CD8-positive, alpha-beta memory T cell (primary cell): ENCODE measurements at regions of chr11 and their contacts with region 1.

Region 1: DNA sequence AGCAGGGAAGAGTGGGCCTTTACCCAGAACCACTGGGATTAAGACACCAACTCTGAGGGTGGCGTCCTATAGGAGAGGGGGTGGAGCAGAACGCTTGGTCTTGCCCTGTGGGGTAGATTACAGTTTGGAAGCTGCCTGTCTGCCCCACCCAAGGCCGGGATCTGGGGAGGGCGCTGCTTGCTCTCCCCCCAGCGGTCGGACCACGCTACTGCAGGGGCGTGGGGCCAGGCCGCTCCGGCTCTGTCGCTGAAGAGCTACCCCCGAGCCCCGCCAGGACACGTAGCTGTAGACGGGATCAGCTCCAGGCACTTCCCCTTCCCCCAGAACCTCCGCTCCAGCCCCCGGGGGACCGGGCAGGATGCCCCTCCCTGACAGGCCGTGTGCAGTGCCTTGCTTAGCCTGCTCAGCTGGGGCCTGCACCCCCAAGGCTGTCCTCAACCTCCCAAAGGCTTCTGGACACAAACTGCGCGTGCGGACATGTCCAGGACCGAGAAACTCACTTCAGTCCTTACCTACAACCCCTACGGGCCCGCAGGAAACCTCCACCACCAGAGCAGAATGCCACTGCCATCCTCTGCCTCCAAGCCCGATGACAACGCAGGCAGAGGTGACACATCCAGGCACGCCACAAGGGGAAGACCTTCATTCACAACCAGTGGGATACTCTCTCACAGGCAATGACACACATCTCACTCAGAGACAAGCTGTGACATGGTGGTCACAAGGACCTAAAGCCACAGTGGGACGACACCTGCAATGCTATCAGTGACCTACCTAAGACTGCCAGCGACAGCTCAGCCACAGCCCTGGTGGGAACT is 3.6 kb downstream of the AHNAK start:
- DNase-seq: peak; percentile 61 to 86 (median 70)
- H3K4me3 ChIP-seq: peak overlapping the region; percentile 76
- H3K4me3 Mint-ChIP-seq: peak overlapping the region; percentile 92 to 99 (median 98)
- H3K27ac ChIP-seq: peak overlapping the region; percentile 96
- H3K27ac Mint-ChIP-seq: peak overlapping the region; percentile 92 to 100 (median 97)
- H3K4me1 ChIP-seq: peaks cover 72% of the 10 kb centered on the region
- H3K4me1 Mint-ChIP-seq: peaks cover 66 to 83% (median 74%) of the 10 kb centered on the region in 3 donors
- H3K27me3 ChIP-seq: no peaks in the 10 kb centered on the region
- H3K27me3 Mint-ChIP-seq: peaks cover 0 to 3% of the 10 kb centered on the region in 2 donors

Region 2: GRCh38 chr11:62370743-62371440 is 172.1 kb before region 1 on chr11:
- CTCF ChIA-PET with region 1: no interaction called
- POLR2A ChIA-PET with region 1: no interaction called
- DNase-seq: peak in 4 of 5 donors; percentile 38 to 71 (median 56)
- H3K4me3 ChIP-seq: no peak overlapping the region
- H3K4me3 Mint-ChIP-seq: peak overlapping the region; percentile 41 to 82 (median 76)
- H3K27ac ChIP-seq: no peak overlapping the region
- H3K27ac Mint-ChIP-seq: peak overlapping the region in 7 of 8 donors; percentile 11 to 91 (median 87)
- H3K4me1 ChIP-seq: no peaks in the 10 kb centered on the region
- H3K4me1 Mint-ChIP-seq: peaks cover 3 to 42% (median 18%) of the 10 kb centered on the region in 3 donors
- H3K27me3 ChIP-seq: no peaks in the 10 kb centered on the region
- H3K27me3 Mint-ChIP-seq: peaks cover 0 to 2% of the 10 kb centered on the region in 2 donors

Region 3: GRCh38 chr11:62400760-62401159 is 142.2 kb before region 1 on chr11:
- CTCF ChIA-PET with region 1: interaction called, 18 read pairs
- POLR2A ChIA-PET with region 1: interaction called, 11 read pairs
- DNase-seq: no peak
- H3K4me3 ChIP-seq: no peak overlapping the region
- H3K4me3 Mint-ChIP-seq: peak overlapping the region in 1 of 7 donors; percentile 25
- H3K27ac ChIP-seq: no peak overlapping the region
- H3K27ac Mint-ChIP-seq: peak overlapping the region in 2 of 8 donors; percentile 12 to 60
- H3K4me1 ChIP-seq: peaks cover 48% of the 10 kb centered on the region
- H3K4me1 Mint-ChIP-seq: peaks cover 23 to 42% (median 25%) of the 10 kb centered on the region in 3 donors
- H3K27me3 ChIP-seq: no peaks in the 10 kb centered on the region
- H3K27me3 Mint-ChIP-seq: peaks cover 0 to 2% of the 10 kb centered on the region in 2 donors

Region 4: DNA sequence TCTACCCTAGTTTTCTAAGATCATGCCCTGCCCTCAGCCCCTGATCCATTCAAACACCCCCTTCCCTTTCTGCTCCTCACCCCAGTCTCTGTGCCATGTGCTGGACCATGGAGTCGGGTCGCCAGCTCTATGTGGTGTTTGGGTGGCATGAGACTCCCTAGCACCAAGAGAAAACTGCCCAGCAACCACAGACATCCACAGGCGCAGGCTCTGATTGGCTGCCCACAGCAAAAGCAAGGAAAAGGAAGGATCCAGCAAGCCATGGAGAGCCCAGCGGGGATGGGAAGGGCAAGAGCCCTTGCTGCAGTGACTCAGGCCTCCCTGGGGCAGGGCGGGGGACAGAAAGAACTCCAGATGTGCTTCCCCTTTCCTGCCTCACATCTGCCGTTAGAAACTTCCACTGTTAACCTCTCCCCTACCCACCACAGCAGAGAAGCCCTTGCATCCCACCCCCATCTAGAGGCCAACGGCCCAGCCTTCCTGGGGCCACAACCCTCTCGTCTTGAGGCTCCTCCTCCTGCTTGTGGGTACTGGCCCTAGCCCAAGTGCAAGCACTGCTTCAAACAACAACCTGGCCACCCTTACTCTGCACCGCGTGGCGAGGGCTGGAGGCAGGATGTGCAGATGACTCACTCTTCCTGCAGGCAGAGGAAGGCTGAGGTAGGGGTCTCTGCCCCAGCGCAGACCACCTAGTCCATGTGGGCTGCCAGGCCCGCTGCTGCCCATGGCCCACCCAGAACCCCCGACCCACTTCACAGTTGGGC is 13.3 kb after region 1 on chr11:
- CTCF ChIA-PET with region 1: interaction called, 203 read pairs
- POLR2A ChIA-PET with region 1: interaction called, 193 read pairs
- DNase-seq: peak; percentile 74 to 95 (median 83)
- H3K4me3 ChIP-seq: peak overlapping the region; percentile 70
- H3K4me3 Mint-ChIP-seq: peak overlapping the region; percentile 80 to 95 (median 85)
- H3K27ac ChIP-seq: peak overlapping the region; percentile 95
- H3K27ac Mint-ChIP-seq: peak overlapping the region; percentile 97 to 100 (median 99)
- H3K4me1 ChIP-seq: peaks cover 96% of the 10 kb centered on the region
- H3K4me1 Mint-ChIP-seq: peaks cover 91 to 97% (median 96%) of the 10 kb centered on the region in 3 donors
- H3K27me3 ChIP-seq: no peaks in the 10 kb centered on the region
- H3K27me3 Mint-ChIP-seq: peaks cover 0 to 5% of the 10 kb centered on the region in 2 donors

Region 5: GRCh38 chr11:62567018-62567633 is 24.2 kb after region 1 on chr11:
- CTCF ChIA-PET with region 1: interaction called, 203 read pairs
- POLR2A ChIA-PET with region 1: interaction called, 193 read pairs
- DNase-seq: no peak
- H3K4me3 ChIP-seq: no peak overlapping the region
- H3K4me3 Mint-ChIP-seq: peak overlapping the region in 3 of 7 donors; percentile 2 to 10 (median 5)
- H3K27ac ChIP-seq: no peak overlapping the region
- H3K27ac Mint-ChIP-seq: peak overlapping the region; percentile 3 to 90 (median 80)
- H3K4me1 ChIP-seq: peaks cover 8% of the 10 kb centered on the region
- H3K4me1 Mint-ChIP-seq: peaks cover 32 to 54% (median 53%) of the 10 kb centered on the region in 3 donors
- H3K27me3 ChIP-seq: no peaks in the 10 kb centered on the region
- H3K27me3 Mint-ChIP-seq: no peaks in the 10 kb centered on the region

Region 6: DNA sequence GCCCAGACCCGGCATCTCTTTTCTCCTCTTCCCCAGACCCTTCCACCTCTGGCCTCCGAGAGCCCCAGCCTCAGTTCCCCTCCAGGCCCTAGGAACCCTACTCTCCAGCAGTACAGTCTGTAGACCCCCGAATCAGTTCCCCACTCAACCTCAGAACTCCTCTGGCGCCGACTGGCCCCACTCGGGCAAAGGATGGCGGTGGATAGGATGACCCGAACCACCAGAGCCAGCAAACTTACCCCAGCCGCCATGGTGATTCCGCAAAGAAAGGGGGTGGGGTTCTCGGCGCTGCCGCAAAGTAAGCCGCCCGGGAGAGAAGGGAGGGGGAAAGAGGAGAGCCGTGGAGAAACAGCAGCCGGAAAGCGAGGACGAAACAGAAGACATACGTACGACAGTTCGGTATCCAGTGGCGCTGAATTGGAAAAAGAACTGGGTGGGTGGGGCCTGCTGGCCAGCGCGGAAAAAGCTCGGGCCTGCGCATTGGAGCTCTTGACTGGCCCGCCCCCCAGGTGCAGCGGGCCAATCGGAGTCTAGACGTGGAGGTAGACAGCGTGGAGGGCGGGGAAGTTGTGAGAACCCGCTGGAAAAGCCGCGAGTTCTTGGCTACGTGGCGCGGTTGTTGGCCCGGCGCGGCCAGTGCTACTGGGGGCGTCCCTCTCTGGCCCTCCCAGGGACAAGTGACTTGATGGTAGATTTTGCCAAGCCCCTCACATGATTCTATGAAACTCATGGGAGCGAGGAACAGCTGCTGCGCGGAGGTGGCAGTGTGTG is 30.8 kb after region 1 on chr11 and contains the start of gene EEF1G:
- CTCF ChIA-PET with region 1: interaction called, 11 read pairs
- POLR2A ChIA-PET with region 1: interaction called, 7 read pairs
- DNase-seq: peak; percentile 96 to 100 (median 99)
- H3K4me3 ChIP-seq: peak within 1 kb of the TSS; percentile 94
- H3K4me3 Mint-ChIP-seq: peak within 1 kb of the TSS; percentile 90 to 98 (median 96)
- H3K27ac ChIP-seq: peak within 1 kb of the TSS; percentile 93
- H3K27ac Mint-ChIP-seq: peak within 1 kb of the TSS; percentile 90 to 97 (median 95)
- H3K4me1 ChIP-seq: peaks cover 24% of the 10 kb centered on the region
- H3K4me1 Mint-ChIP-seq: peaks cover 46 to 59% (median 52%) of the 10 kb centered on the region in 3 donors
- H3K27me3 ChIP-seq: no peaks in the 10 kb centered on the region
- H3K27me3 Mint-ChIP-seq: no peaks in the 10 kb centered on the region
- total RNA-seq, gene EEF1G: 1,800 to 1,846 TPM

Region 7: DNA sequence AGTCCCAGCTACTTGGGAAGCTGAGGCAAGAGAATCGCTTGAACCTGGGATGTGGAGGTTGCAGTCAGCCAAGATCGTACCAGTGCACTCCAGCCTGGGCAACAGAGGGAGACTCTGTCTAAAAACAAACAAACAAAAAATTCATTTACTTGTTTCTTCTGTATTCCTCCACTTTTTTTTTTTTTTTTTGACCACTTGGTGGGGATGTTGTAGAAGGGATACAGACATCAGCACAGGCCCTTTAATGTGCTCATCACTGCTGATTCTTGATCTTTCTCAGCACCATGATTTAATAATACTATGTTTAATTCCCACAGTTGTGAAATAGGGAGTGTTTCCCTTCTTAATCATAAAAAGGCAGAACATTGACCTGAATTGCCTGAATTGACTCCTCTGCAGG is 189.8 kb after region 1 on chr11:
- CTCF ChIA-PET with region 1: no interaction called
- POLR2A ChIA-PET with region 1: no interaction called
- DNase-seq: peak in 1 of 5 donors; percentile 19
- H3K4me3 ChIP-seq: no peak overlapping the region
- H3K4me3 Mint-ChIP-seq: peak overlapping the region in 2 of 7 donors; percentile 23 to 50
- H3K27ac ChIP-seq: no peak overlapping the region
- H3K27ac Mint-ChIP-seq: peak overlapping the region in 6 of 8 donors; percentile 6 to 70 (median 15)
- H3K4me1 ChIP-seq: peaks cover 16% of the 10 kb centered on the region
- H3K4me1 Mint-ChIP-seq: peaks cover 24 to 33% (median 30%) of the 10 kb centered on the region in 3 donors
- H3K27me3 ChIP-seq: no peaks in the 10 kb centered on the region
- H3K27me3 Mint-ChIP-seq: no peaks in the 10 kb centered on the region